ENCODE measurements at regions of chr2 and their contacts with region 1.

Region 1: DNA sequence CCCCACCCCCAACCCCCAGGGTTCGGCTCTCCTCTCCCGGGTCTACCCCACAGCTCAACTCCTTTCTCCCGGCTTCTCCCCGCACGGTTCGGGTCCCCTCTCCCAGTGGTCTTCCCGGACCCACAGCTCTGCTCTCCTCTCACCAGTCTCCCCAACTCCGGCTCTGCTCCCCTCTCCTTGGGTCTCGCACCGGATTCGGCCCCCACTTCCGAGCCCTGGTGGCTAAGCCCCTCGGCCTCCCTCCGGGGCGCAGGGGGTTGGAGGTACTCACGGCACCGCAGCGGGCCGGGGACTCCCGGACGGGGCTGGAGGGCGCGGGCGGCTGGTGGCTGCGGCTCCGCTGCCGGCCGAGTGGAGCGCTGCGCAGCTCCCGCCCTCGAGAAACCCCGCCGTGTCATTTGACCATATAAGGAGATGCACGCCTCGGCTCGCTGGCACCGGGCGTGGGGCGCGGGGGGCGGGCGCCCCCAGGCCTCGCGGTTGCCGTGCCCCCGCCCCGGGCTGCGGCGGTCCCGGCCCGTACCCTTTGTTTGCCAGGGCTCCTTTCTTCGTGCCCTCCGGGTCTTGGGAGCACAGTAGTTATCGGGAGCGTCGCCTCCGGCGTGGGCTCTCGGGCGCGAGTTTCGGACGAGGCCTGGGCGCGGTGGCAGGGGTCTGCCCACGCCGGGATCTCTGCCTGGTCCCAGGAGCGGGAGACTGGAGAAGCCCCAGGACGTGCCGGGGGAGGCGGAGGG is at the start of gene FHL2:
- DNase-seq: peak; percentile 48
- ATAC-seq: peak; percentile 81
- H3K4me3 ChIP-seq: peak within 1 kb of the TSS; percentile 92 to 93
- H3K27ac ChIP-seq: peak within 1 kb of the TSS; percentile 91
- H3K4me1 ChIP-seq: peaks cover 34 to 64% of the 10 kb centered on the region in 2 experiments
- H3K27me3 ChIP-seq: no peaks in the 10 kb centered on the region
- CTCF ChIP-seq: peak in 2 of 3 experiments; percentile 45 to 47; a peak in 4 of 6 replicates
- POLR2A ChIP-seq: peak; percentile 22
- RAD21 ChIP-seq: no peak
- total RNA-seq, gene FHL2: 86.6 TPM

Region 2: DNA sequence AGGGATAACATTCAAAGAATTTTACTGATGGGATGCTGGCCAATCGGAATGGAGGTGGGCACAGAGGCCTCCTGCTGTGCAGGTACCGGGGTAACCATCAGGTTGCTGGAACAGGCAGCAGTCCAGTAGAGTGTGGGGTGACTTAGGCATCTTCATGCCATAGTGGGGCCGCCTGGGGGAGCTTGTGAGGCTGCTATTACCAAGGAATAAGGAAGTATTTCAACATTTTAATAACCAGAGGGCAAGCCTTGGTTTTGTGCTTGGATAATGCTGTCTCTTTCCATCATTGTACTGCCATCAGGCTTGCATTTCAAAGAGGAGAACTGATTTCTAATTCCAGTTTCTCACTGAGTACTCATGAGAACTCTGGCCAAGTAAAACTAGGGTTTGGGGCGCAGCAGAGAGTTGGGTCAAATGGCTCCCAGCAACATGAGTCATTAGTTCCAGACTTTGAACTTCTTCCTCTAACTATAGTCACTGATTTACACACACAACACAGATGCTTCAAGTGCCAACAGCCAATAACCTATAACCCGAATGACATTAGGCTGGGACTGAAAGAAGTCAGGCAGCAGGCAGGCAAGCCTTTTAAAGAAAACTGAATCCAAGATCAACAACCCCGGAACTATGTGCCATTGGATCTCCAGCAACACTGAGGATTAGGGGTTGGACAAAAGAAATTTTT is 56.1 kb after region 1 on chr2:
- CTCF ChIA-PET with region 1: no interaction called
- POLR2A ChIA-PET with region 1: interaction called, 10 read pairs
- RAD21 ChIA-PET with region 1: no interaction called
- intact Hi-C with region 1: loop called (anchors 1 kb)
- DNase-seq: peak; percentile 69
- ATAC-seq: peak; percentile 82
- H3K4me3 ChIP-seq: peak overlapping the region in 1 of 2 experiments; percentile 34
- H3K27ac ChIP-seq: peak overlapping the region; percentile 48
- H3K4me1 ChIP-seq: peaks cover 19 to 23% of the 10 kb centered on the region in 2 experiments
- H3K27me3 ChIP-seq: no peaks in the 10 kb centered on the region
- CTCF ChIP-seq: peak; percentile 29 to 64 (median 56); a peak in 5 of 6 replicates
- POLR2A ChIP-seq: no peak
- RAD21 ChIP-seq: peak; percentile 47

Region 3: GRCh38 chr2:105691947-105692390 is 293.1 kb after region 1 on chr2:
- CTCF ChIA-PET with region 1: no interaction called
- POLR2A ChIA-PET with region 1: no interaction called
- RAD21 ChIA-PET with region 1: no interaction called
- intact Hi-C with region 1: no loop called
- DNase-seq: no peak
- ATAC-seq: no peak
- H3K4me3 ChIP-seq: no peak overlapping the region
- H3K27ac ChIP-seq: no peak overlapping the region
- H3K4me1 ChIP-seq: no peaks in the 10 kb centered on the region
- H3K27me3 ChIP-seq: peaks cover 7% of the 10 kb centered on the region; the same call in 1 of the 2 replicates
- CTCF ChIP-seq: no peak
- POLR2A ChIP-seq: no peak
- RAD21 ChIP-seq: no peak